ENCODE measurements at regions of chr10 and their contacts with region 1.

Region 1: GRCh38 chr10:13659897-13660550 is 73.3 kb downstream of the PRPF18 start:
- DNase-seq: no peak
- ATAC-seq: no peak; the same call in 1 of the 2 replicates
- H3K4me3 ChIP-seq: no peak overlapping the region
- H3K27ac ChIP-seq: no peak overlapping the region
- H3K4me1 ChIP-seq: no peaks in the 10 kb centered on the region
- H3K27me3 ChIP-seq: no peaks in the 10 kb centered on the region
- CTCF ChIP-seq: peak; percentile 90

Region 2: DNA sequence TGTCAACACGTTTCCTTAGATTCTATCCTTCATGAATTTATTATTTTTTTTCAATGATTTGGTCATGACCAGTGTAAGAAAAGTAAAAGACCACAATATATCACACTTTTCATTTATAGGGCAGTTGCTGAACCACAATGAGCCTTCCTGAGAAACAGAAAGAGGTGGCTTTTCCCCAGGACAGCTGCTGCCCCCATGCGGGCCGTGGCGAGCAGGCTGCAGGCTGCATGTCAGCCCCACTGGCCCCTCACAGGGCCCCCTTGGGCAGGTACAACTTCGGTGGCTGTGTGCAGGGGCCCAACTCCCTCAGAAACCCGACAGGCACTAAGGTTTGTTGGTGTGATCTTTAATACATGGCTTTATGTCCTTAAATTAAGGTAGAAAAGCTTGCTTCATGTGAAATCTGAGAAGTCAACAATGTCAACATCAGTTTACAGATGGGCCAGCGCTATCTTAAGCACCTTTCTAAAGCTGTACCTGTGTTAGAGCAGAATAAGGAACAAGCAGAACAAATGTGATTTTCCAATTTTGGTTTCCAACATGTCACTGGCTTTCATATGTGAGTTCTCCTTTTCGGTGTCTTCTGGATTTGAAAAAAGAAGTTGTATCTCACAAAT is 141.8 kb before region 1 on chr10:
- CTCF ChIA-PET with region 1: no interaction called
- POLR2A ChIA-PET with region 1: no interaction called
- in situ Hi-C with region 1: no loop called
- intact Hi-C with region 1: no loop called
- DNase-seq: peak; percentile 2
- ATAC-seq: no peak
- H3K4me3 ChIP-seq: no peak overlapping the region
- H3K27ac ChIP-seq: no peak overlapping the region
- H3K4me1 ChIP-seq: no peaks in the 10 kb centered on the region
- H3K27me3 ChIP-seq: no peaks in the 10 kb centered on the region
- CTCF ChIP-seq: peak; percentile 62

Region 3: DNA sequence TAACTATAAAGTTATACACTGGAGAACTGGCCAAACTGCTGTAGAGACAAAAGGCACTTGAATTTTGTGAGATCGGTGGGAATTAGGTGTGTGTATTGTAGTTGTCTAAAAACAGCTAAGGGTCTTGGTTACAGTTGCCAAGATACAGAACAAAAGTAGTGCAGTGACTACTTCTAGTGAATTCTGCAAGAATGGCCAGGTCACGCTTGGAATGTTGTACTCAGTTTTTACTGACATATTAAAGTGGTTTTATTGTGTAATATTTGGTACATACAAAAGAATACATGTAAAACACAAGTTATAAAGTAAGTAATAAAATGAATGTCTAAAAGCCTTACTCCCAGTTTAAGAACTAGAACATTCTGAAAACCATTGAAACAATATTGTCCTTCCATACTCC is 30.9 kb before region 1 on chr10:
- CTCF ChIA-PET with region 1: interaction called, 10 read pairs
- POLR2A ChIA-PET with region 1: no interaction called
- in situ Hi-C with region 1: no loop called
- intact Hi-C with region 1: no loop called
- DNase-seq: no peak
- ATAC-seq: no peak
- H3K4me3 ChIP-seq: no peak overlapping the region
- H3K27ac ChIP-seq: no peak overlapping the region
- H3K4me1 ChIP-seq: no peaks in the 10 kb centered on the region
- H3K27me3 ChIP-seq: no peaks in the 10 kb centered on the region
- CTCF ChIP-seq: no peak

Region 4: GRCh38 chr10:13724484-13724883 is 64.5 kb after region 1 on chr10:
- CTCF ChIA-PET with region 1: no interaction called
- POLR2A ChIA-PET with region 1: no interaction called
- in situ Hi-C with region 1: no loop called
- intact Hi-C with region 1: no loop called
- DNase-seq: no peak
- ATAC-seq: no peak
- H3K4me3 ChIP-seq: no peak overlapping the region
- H3K27ac ChIP-seq: no peak overlapping the region
- H3K4me1 ChIP-seq: no peaks in the 10 kb centered on the region
- H3K27me3 ChIP-seq: no peaks in the 10 kb centered on the region
- CTCF ChIP-seq: no peak

Region 5: GRCh38 chr10:13776861-13777311 is 116.9 kb after region 1 on chr10:
- CTCF ChIA-PET with region 1: no interaction called
- POLR2A ChIA-PET with region 1: no interaction called
- in situ Hi-C with region 1: no loop called
- intact Hi-C with region 1: loop called (anchors 1 kb)
- DNase-seq: no peak
- ATAC-seq: no peak
- H3K4me3 ChIP-seq: no peak overlapping the region
- H3K27ac ChIP-seq: no peak overlapping the region
- H3K4me1 ChIP-seq: no peaks in the 10 kb centered on the region
- H3K27me3 ChIP-seq: no peaks in the 10 kb centered on the region
- CTCF ChIP-seq: no peak